A673 (cell line): ENCODE measurements at regions of chr6 and their contacts with region 1.

Region 1: DNA sequence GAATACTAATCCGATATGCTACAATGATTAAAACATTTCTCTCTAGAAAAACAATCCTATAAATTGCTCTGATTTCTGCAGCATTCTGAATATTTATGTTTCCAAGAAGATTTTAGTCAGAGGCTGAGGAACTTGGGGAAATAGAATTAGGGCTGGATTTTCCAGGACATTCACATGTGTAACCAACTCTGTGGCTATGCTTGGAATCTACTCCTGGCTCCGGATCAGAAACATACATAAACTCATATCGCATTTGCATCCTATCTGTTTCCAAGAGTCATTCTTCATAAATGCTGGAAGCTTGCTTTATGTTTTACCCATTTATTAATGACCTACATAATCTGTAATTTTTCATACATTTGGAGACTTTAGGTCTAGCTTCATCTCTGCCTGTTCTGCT is 459.9 kb upstream of the MARCKS start:
- DNase-seq: no peak
- H3K4me3 ChIP-seq: no peak overlapping the region
- H3K27ac ChIP-seq: no peak overlapping the region
- H3K4me1 ChIP-seq: peaks cover 5% of the 10 kb centered on the region
- H3K27me3 ChIP-seq: no peaks in the 10 kb centered on the region
- CTCF ChIP-seq: no peak

Region 2: GRCh38 chr6:113774127-113774825 is 377.0 kb after region 1 on chr6:
- CTCF ChIA-PET with region 1: no interaction called
- POLR2A ChIA-PET with region 1: no interaction called
- intact Hi-C with region 1: loop called (anchors 10 kb)
- DNase-seq: peak; percentile 51
- H3K4me3 ChIP-seq: no peak overlapping the region
- H3K27ac ChIP-seq: no peak overlapping the region
- H3K4me1 ChIP-seq: peaks cover 3% of the 10 kb centered on the region
- H3K27me3 ChIP-seq: no peaks in the 10 kb centered on the region
- CTCF ChIP-seq: no peak